Tibial artery (tissue), 4 donors: ENCODE measurements at regions of chr6 and their contacts with region 1.

Region 1: GRCh38 chr6:7910654-7911344 is at the start of gene TXNDC5:
- DNase-seq: peak; percentile 69 to 89
- H3K4me3 ChIP-seq: peak within 1 kb of the TSS; percentile 68 to 86
- H3K27ac ChIP-seq: peak within 1 kb of the TSS; percentile 77 to 78
- H3K4me1 ChIP-seq: peaks cover 0 to 23% (median 14%) of the 10 kb centered on the region in 4 donors
- H3K27me3 ChIP-seq: no peaks in the 10 kb centered on the region
- CTCF ChIP-seq: no peak

Region 2: DNA sequence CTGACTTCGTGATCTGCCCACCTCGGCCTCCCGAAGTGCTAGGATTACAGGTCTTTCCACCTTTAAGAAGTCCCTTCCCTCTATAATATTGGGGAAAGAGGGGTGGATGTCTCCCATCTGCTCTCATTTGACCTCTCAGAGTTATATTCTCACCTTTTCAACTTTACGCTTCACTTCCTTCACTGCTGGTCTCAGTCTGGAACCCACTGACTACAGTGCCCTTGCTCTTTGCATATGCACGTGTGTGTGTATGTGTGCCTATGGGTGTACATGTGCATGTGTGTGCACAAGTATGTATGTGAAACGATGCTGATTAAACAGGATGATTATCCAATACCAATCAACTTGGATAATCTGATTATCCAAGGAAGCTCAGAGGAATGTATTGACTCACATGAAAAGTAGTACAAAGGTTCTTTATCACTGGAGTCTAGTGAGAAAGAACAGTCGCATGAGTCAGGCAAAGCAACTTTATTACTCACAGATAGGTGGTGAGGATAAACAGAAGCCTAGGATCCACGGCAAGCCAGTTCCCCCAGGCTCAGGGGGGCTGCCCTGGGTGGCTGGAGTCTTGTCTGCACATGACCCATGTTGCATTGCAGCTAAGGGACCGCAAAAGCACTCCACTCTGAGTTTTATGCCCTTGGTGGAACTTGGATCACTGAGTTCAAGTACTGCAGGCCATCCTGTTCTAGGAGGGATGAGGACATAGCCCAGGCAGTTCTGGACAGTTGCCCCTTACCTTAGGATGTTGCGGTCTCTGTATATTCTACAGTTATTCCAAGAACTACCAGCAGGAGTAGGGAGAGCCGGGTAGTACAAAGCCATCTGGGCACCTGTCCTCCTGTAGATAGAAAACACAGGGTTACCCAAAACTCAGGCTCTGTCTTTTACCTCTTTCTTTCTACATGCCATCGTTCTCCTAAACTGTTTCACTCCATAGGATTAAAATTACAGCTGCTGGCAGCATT is 269.9 kb before region 1 on chr6:
- intact Hi-C with region 1: no loop called
- DNase-seq: no peak
- H3K4me3 ChIP-seq: no peak overlapping the region
- H3K27ac ChIP-seq: no peak overlapping the region
- H3K4me1 ChIP-seq: no peaks in the 10 kb centered on the region
- H3K27me3 ChIP-seq: no peaks in the 10 kb centered on the region
- CTCF ChIP-seq: no peak

Region 3: DNA sequence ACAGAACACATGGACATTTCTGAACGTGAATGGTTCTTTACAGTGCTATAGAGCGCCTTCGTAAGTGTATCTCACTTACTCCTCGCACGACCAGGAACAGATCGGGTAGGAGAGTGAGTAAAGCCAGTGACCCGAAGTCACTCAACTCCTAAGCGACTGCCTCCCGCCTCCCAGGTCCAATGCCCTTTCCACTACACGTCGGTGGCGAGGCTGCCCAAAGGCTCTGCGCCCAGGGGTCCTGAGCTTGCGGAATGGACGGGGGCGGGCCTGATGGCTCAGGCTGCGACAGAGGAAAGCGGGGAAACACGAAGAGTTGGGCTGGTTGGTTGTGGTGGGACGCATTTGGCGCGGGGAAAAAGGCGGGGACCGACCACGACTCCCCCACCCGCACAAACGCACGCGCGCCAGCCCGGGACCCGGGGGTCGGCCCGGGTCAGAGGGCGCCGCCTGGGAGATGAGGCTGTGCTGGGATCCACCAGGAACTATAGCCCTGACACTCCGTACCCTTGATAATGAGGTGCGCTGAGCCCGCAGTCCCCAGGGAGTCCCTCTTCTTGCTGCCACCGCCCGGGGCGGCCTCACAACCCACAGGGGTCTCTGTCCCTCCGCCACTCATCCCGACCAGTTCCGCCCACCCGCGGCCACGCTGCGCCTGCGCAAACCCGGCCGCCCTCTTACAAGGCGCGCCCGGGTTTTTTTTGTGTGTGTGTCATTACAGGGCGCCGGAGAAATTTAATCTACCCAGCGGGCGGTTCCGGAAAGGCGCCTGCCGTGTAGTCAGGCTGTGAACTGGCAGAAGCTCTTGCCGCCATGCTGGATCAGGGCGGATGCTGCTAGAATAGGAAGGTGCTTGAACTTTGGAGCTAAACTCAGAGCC is 153.2 kb after region 1 on chr6 and contains the start of gene BLOC1S5:
- intact Hi-C with region 1: loop called (anchors 10 kb)
- DNase-seq: peak; percentile 98
- H3K4me3 ChIP-seq: peak within 1 kb of the TSS; percentile 94 to 97
- H3K27ac ChIP-seq: peak within 1 kb of the TSS; percentile 94 to 97
- H3K4me1 ChIP-seq: peaks cover 0 to 7% (median 3%) of the 10 kb centered on the region in 4 donors
- H3K27me3 ChIP-seq: no peaks in the 10 kb centered on the region
- CTCF ChIP-seq: peak in 1 of 2 experiments; percentile 27